ENCODE measurements at regions of chr2 and their contacts with region 1.

Region 1: GRCh38 chr2:179264368-179265081 is at the start of gene SESTD1:
- DNase-seq: peak; percentile 23 to 57 (median 39)
- H3K4me3 ChIP-seq: peak within 1 kb of the TSS in 1 of 2 donors; percentile 51
- H3K4me3 Mint-ChIP-seq: peak within 1 kb of the TSS; percentile 80 to 90 (median 83)
- H3K27ac ChIP-seq: no peak within 1 kb of the TSS
- H3K27ac Mint-ChIP-seq: peak within 1 kb of the TSS in 5 of 7 donors; percentile 9 to 85 (median 52)
- H3K4me1 ChIP-seq: peaks cover 10% of the 10 kb centered on the region
- H3K4me1 Mint-ChIP-seq: peaks cover 4 to 21% (median 13%) of the 10 kb centered on the region in 4 donors
- H3K27me3 ChIP-seq: no peaks in the 10 kb centered on the region
- H3K27me3 Mint-ChIP-seq: peaks cover 10 to 22% of the 10 kb centered on the region in 2 donors
- total RNA-seq, gene SESTD1: 11.5 to 11.9 TPM

Region 2: DNA sequence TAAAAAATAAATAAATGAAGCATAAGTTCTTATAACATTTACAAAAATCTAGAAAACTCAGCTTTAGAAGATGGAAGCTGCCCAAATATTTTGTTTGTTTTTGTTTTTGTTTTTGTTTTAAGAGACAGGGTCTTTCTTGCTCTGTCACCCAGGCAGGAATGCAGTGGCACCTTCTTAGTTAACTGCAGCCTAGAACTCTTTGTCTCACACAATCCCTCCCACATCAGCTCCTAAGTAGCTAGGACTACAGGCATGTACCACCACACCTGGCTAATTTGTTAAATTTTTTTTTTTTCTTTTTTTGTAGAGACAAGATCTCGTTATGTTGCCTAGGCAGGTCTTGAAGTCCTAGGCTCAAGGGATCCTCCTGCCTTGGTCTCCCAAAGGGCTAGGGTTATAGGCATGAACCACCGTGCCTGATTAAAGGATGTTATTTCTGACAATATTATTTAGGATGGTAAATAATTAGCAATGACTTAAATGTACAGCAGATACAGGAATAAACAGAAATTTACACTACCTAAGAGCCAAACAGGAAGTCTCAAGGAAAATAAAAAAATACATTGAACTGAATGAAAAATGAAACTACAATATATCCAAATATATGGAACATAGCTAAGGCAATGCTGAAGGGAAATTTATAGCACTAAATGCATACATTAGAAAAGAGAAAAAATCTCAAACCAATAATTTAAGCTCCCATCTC is 17.1 kb before region 1 on chr2:
- CTCF ChIA-PET with region 1: no interaction called
- POLR2A ChIA-PET with region 1: no interaction called
- intact Hi-C with region 1: loop called (anchors 2 kb)
- DNase-seq: no peak
- H3K4me3 ChIP-seq: no peak overlapping the region
- H3K4me3 Mint-ChIP-seq: peak overlapping the region in 5 of 8 donors; percentile 24 to 82 (median 45)
- H3K27ac ChIP-seq: no peak overlapping the region
- H3K27ac Mint-ChIP-seq: peak overlapping the region in 2 of 7 donors; percentile 65 to 68
- H3K4me1 ChIP-seq: no peaks in the 10 kb centered on the region
- H3K4me1 Mint-ChIP-seq: peaks cover 0 to 37% (median 5%) of the 10 kb centered on the region in 4 donors
- H3K27me3 ChIP-seq: no peaks in the 10 kb centered on the region
- H3K27me3 Mint-ChIP-seq: no peaks in the 10 kb centered on the region

Region 3: GRCh38 chr2:179253226-179253625 is 11.3 kb before region 1 on chr2:
- CTCF ChIA-PET with region 1: no interaction called
- POLR2A ChIA-PET with region 1: no interaction called
- intact Hi-C with region 1: loop called (anchors 1 kb)
- DNase-seq: no peak
- H3K4me3 ChIP-seq: no peak overlapping the region
- H3K4me3 Mint-ChIP-seq: peak overlapping the region in 3 of 8 donors; percentile 12 to 73 (median 56)
- H3K27ac ChIP-seq: no peak overlapping the region
- H3K27ac Mint-ChIP-seq: peak overlapping the region in 1 of 7 donors; percentile 33
- H3K4me1 ChIP-seq: no peaks in the 10 kb centered on the region
- H3K4me1 Mint-ChIP-seq: peaks cover 0 to 34% (median 9%) of the 10 kb centered on the region in 4 donors
- H3K27me3 ChIP-seq: no peaks in the 10 kb centered on the region
- H3K27me3 Mint-ChIP-seq: no peaks in the 10 kb centered on the region